ENCODE measurements at regions of chr9 and their contacts with region 1.

Region 1: GRCh38 chr9:106862825-106863720 is at the start of gene ZNF462:
- DNase-seq: peak; percentile 42
- ATAC-seq: peak; percentile 19
- H3K4me3 ChIP-seq: peak within 1 kb of the TSS; percentile 98
- H3K27ac ChIP-seq: peak within 1 kb of the TSS; percentile 67
- H3K4me1 ChIP-seq: peaks cover 49% of the 10 kb centered on the region
- H3K27me3 ChIP-seq: no peaks in the 10 kb centered on the region
- CTCF ChIP-seq: peak; percentile 54; the same call in 1 of the 2 replicates
- total RNA-seq, gene ZNF462: 21.2 and 23.4 TPM in 2 replicates

Region 2: DNA sequence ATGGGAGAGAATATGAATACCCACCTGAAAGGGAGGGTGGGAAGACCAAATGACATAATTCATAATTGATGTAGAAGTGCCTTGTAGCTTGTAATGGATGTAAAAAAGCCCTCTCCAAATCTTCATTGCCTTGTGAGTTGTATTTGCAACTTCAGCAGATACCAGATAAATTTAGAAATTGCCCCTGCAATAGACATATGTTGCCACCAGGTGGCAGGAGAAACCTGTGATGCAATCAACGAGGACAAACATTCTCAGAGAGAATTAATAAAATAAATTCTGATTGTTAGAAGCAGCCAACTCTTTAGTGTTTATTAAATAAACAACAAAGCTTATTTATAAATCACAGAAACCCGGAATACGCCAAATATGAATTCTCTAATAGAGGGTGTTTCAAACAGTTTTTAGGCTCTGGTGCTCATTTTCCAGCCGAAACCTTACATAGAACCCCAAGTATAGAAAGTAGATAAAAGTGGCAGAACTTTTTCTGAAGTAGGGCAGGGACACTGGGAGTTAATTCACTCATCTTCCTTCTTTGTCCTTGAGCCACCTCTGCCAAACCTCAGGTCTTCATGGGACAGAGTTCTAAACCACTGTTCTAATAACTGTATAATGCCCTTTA is 1020.9 kb before region 1 on chr9:
- CTCF ChIA-PET with region 1: no interaction called
- POLR2A ChIA-PET with region 1: no interaction called
- intact Hi-C with region 1: loop called (anchors 5 kb)
- DNase-seq: peak; percentile 73
- ATAC-seq: no peak
- H3K4me3 ChIP-seq: no peak overlapping the region
- H3K27ac ChIP-seq: no peak overlapping the region
- H3K4me1 ChIP-seq: no peaks in the 10 kb centered on the region
- H3K27me3 ChIP-seq: no peaks in the 10 kb centered on the region
- CTCF ChIP-seq: peak; percentile 84

Region 3: GRCh38 chr9:106287091-106287631 is 575.9 kb before region 1 on chr9:
- CTCF ChIA-PET with region 1: no interaction called
- POLR2A ChIA-PET with region 1: interaction called, 11 read pairs
- intact Hi-C with region 1: no loop called
- DNase-seq: no peak
- ATAC-seq: no peak
- H3K4me3 ChIP-seq: no peak overlapping the region
- H3K27ac ChIP-seq: no peak overlapping the region
- H3K4me1 ChIP-seq: no peaks in the 10 kb centered on the region
- H3K27me3 ChIP-seq: no peaks in the 10 kb centered on the region
- CTCF ChIP-seq: no peak

Region 4: DNA sequence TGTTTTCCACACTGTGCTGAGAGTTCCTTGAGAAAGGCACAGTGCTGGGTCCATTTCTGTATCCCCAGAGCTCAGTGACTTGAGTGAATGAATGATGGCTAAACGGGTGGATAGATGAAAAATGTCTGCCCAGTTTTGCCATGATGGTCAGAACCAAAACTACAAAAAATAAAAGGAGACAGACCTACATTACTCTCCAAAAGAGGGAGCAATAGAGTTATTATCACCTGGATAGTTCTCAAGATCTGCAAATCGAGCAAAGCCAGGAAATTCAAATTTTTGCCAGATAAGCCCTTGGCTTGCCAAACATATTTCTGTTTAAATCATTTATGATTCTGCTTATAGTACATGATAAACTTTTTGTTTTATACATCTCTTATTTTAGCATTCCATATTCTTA is 214.3 kb before region 1 on chr9:
- CTCF ChIA-PET with region 1: no interaction called
- POLR2A ChIA-PET with region 1: no interaction called
- intact Hi-C with region 1: loop called (anchors 2 kb)
- DNase-seq: peak; percentile 59
- ATAC-seq: no peak
- H3K4me3 ChIP-seq: no peak overlapping the region
- H3K27ac ChIP-seq: no peak overlapping the region
- H3K4me1 ChIP-seq: no peaks in the 10 kb centered on the region
- H3K27me3 ChIP-seq: no peaks in the 10 kb centered on the region
- CTCF ChIP-seq: peak; percentile 60

Region 5: GRCh38 chr9:106769331-106769730 is 93.7 kb before region 1 on chr9:
- CTCF ChIA-PET with region 1: no interaction called
- POLR2A ChIA-PET with region 1: no interaction called
- intact Hi-C with region 1: no loop called
- DNase-seq: no peak
- ATAC-seq: no peak
- H3K4me3 ChIP-seq: no peak overlapping the region
- H3K27ac ChIP-seq: no peak overlapping the region
- H3K4me1 ChIP-seq: peaks cover 8% of the 10 kb centered on the region; the same call in 1 of the 2 replicates
- H3K27me3 ChIP-seq: no peaks in the 10 kb centered on the region
- CTCF ChIP-seq: no peak

Region 6: GRCh38 chr9:106892632-106893031 is 29.6 kb after region 1 on chr9:
- CTCF ChIA-PET with region 1: interaction called, 5 read pairs
- POLR2A ChIA-PET with region 1: no interaction called
- intact Hi-C with region 1: loop called (anchors 2 kb)
- DNase-seq: peak; percentile 97
- ATAC-seq: peak; percentile 98
- H3K4me3 ChIP-seq: peak overlapping the region; percentile 34; the same call in 1 of the 2 replicates
- H3K27ac ChIP-seq: peak overlapping the region; percentile 98
- H3K4me1 ChIP-seq: peaks cover 51% of the 10 kb centered on the region
- H3K27me3 ChIP-seq: no peaks in the 10 kb centered on the region
- CTCF ChIP-seq: no peak

Region 7: DNA sequence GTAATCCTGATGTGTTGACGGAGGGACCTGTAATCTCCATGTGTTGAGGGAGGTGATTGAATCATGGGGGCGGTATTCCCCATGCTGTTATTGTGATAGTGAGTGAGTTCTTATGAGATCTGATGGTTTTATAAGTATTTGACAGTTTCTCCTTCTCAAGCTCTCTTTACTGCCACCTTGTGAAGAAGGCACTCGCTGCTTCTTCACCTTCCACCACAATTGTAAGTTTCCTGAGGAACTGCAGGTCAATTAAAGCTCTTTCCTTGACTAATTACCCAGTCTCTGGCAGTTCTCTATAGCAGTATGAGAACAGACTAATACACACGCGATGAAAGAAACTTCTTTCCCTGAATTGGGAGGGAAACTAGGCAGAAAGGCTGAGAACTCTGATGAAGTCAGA is 278.9 kb after region 1 on chr9:
- CTCF ChIA-PET with region 1: no interaction called
- POLR2A ChIA-PET with region 1: no interaction called
- intact Hi-C with region 1: loop called (anchors 5 kb)
- DNase-seq: peak; percentile 11
- ATAC-seq: no peak
- H3K4me3 ChIP-seq: no peak overlapping the region
- H3K27ac ChIP-seq: no peak overlapping the region
- H3K4me1 ChIP-seq: no peaks in the 10 kb centered on the region
- H3K27me3 ChIP-seq: no peaks in the 10 kb centered on the region
- CTCF ChIP-seq: peak; percentile 38; the same call in 1 of the 2 replicates